Kidney (tissue), 22 donors: ENCODE measurements at regions of chr2 and their contacts with region 1.

Region 1: GRCh38 chr2:240851078-240851991 is 17.3 kb upstream of the AGXT start:
- DNase-seq: peak; percentile 82 to 93 (median 88)
- H3K4me3 ChIP-seq: no peak overlapping the region
- H3K27ac ChIP-seq: no peak overlapping the region
- H3K4me1 ChIP-seq: peaks cover 0 to 3% (median 0%) of the 10 kb centered on the region in 3 donors
- H3K27me3 ChIP-seq: no peaks in the 10 kb centered on the region
- CTCF ChIP-seq: peak; percentile 94

Region 2: DNA sequence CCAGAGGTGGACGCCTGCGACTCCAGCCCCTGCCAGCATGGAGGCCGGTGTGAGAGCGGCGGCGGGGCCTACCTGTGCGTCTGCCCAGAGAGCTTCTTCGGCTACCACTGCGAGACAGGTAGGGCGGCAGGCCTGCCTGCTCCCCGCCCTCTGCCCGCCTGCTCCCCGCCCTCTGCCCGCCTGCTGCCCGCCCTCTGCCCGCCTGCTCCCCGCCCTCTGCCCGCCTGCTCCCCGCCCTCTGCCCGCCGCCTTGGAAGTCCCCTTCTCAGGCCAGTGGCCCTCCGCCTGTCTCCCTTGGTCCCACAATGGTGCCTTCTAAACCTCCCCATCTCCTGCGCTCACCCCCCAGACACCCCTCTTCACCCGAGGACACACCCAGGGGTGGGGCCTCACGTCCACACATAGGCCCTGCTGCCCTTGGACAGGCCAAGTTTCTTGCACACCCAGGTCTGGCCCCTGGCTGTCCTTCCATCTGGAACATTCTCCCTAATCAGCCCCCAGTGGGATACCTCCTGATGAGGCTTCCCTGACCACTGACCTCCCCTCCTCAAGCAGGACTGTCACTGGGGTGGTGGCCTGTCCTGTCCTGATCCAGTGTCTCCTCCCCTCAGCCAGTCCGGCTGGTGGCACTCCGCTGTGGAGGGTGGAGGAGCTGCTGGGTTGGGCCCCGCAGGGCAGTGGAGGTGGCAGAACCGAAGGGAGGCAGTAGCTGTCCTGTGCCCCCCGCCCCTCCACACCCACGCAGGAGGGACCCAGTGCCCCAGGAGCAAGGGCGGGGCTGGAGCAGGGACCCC is 212.9 kb after region 1 on chr2:
- intact Hi-C with region 1: loop called (anchors 10 kb)
- DNase-seq: peak in 3 of 5 donors; percentile 21 to 90 (median 52)
- H3K4me3 ChIP-seq: peak overlapping the region in 1 of 3 donors; percentile 35
- H3K27ac ChIP-seq: no peak overlapping the region
- H3K4me1 ChIP-seq: peaks cover 0 to 2% (median 0%) of the 10 kb centered on the region in 3 donors
- H3K27me3 ChIP-seq: no peaks in the 10 kb centered on the region
- CTCF ChIP-seq: no peak

Region 3: GRCh38 chr2:241217320-241218031 is 366.1 kb after region 1 on chr2:
- intact Hi-C with region 1: loop called (anchors 5 kb)
- DNase-seq: peak; percentile 82 to 94 (median 88)
- H3K4me3 ChIP-seq: peak overlapping the region in 2 of 3 donors; percentile 38 to 54
- H3K27ac ChIP-seq: peak overlapping the region; percentile 80 to 87
- H3K4me1 ChIP-seq: peaks cover 0 to 3% (median 0%) of the 10 kb centered on the region in 3 donors
- H3K27me3 ChIP-seq: no peaks in the 10 kb centered on the region
- CTCF ChIP-seq: no peak